AG04449 (cell line): ENCODE measurements at regions of chr9 and their contacts with region 1.

Region 1: DNA sequence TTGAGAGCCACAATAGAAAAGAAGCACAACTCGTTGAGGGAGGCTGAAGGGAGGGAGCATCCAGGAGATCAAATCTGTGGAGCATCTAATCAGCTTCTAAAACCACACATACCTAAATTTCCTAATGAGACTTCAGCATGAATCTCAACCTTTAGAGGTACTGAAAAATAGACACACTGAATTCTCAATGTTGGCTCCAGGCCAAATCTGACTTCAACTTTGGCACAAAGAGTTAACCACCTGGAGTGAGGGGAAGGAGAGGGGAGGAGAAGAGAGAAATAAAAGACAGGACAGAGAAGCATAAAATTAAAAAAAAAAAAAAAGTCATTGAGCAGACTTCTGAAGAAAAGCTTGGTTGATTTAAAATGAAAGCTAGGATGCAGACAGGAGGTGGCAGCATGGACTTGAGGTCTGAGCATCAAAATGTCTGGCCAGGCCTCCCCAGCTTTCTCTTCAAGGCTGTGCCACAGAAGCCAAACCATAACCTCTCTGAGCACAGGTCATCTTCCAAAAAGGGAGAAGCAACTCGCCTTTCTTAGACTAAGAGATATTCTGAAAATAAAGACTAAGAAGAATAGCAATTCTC is 205.6 kb downstream of the DENND1A start:
- DNase-seq: peak; percentile 10
- H3K4me3 ChIP-seq: no peak overlapping the region
- CTCF ChIP-seq: peak; percentile 34

Region 2: DNA sequence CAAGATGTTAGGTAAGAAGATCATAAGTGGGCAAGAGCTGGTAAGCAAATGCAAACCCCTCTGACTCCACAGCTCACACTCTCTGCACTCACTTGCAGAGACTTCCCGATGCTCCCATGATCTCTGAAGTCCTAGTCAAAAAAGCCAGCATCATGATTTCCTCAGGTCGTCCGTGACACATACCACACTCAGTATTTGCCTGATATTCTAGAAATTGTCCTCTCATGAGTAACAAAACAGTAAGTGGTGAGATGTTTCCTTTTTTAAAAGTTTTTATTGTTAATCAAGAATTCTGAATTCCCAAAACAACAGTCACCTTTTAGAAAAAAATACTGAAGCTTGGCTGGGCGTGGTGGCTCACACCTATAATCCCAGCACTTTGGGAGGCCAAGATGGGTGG is 11.1 kb after region 1 on chr9:
- CTCF ChIA-PET with region 1: interaction called, 26 read pairs
- POLR2A ChIA-PET with region 1: interaction called, 6 read pairs
- DNase-seq: no peak
- H3K4me3 ChIP-seq: no peak overlapping the region
- CTCF ChIP-seq: no peak

Region 3: DNA sequence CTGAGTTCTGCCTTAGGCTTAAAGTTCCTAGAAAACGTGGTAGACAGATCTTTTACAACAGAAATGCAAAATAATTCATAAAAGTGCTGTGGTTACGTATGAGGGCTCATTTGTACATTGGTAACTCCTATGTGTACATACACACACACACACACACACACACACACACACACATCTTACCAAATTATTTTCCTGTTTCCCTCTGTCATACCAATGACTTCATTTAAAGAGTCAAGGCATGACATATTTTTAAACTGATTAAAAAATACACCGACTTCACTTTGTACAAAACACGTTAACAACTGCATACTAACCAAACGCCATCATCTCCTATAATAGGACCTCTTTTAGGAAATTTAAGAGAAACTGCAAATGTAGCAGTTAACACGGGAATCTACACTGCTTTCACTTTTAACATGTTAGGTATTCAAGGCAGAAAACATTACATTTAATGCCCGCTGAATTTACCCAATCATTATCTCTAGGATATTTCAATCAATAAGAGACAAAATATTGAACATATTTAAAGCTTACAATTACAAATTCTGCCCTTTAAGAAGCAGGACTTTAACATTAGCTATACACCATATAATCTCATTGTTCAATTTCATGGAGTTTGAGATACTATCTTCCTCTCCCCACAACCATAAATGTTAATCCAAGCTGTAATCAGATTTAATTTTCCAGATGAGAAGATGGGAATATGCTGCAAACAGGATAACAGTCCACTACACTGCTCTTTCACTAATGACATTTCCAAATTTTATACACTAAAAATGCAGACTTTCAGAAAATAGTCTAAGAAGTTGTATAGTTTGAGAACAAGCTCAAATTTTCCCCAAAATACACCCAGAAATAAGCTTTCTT is 72.5 kb after region 1 on chr9:
- CTCF ChIA-PET with region 1: no interaction called
- POLR2A ChIA-PET with region 1: no interaction called
- DNase-seq: no peak
- H3K4me3 ChIP-seq: no peak overlapping the region
- CTCF ChIP-seq: no peak